ENCODE measurements at regions of chr1 and their contacts with region 1.

Region 1: DNA sequence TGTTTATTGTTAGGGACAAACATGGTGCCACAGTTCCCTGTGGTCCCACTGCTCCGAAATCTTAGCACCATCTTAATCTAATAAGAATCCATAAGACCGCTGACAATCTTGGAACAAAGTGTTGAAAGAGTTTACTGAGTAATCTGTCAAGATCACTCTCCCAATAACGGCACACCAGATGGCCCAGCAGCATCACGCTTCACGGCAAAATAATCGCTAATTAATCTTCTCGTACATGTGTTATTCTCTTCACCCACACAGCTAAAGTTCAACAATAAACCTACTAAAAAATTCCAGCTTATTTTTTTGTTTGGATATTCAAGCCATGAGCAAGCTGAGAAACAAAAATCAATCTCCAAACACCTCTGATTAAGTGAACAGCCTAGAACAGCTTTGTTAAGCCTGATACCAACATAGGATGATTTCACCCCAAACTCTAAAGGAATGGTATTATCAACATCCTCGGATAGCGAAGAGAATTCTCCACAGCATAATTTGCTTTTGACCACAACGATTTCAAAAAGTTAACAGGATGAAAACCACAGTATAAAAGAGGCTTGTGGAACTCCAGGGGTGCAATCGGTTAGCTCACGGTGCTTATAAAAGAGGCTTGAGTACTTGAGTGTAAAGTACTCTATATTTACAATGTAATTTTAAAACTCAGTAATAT is 329.9 kb upstream of the GREM2 start:
- DNase-seq: no peak

Region 2: DNA sequence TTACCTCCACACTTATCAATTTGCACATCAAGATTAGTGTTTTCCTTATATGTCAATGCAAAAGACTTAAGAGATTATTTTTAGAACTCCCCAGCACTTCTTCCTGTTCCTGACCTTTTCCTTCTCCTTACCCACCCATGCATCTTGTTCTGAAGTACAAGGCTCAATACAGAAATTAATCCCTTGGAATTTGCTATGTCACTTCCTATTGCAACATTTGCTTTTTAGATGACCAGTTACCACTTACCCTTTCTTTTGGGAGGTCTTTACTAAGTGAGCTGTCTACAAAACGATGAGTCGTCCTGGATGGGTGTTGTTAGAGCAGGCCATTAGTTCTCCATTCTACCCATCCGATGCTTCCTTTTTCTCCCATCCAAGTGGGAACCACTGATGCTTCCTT is 629.0 kb before region 1 on chr1:
- intact Hi-C with region 1: no loop called
- DNase-seq: no peak

Region 3: GRCh38 chr1:240956020-240956419 is 14.2 kb after region 1 on chr1:
- intact Hi-C with region 1: loop called in 1 of 2 experiments (anchors 2 kb)
- DNase-seq: no peak